Activated naive CD4-positive, alpha-beta T cell treated with anti-CD3 and anti-CD28 coated beads for 36 hours (primary cell): ENCODE measurements at regions of chr3 and their contacts with region 1.

Region 1: DNA sequence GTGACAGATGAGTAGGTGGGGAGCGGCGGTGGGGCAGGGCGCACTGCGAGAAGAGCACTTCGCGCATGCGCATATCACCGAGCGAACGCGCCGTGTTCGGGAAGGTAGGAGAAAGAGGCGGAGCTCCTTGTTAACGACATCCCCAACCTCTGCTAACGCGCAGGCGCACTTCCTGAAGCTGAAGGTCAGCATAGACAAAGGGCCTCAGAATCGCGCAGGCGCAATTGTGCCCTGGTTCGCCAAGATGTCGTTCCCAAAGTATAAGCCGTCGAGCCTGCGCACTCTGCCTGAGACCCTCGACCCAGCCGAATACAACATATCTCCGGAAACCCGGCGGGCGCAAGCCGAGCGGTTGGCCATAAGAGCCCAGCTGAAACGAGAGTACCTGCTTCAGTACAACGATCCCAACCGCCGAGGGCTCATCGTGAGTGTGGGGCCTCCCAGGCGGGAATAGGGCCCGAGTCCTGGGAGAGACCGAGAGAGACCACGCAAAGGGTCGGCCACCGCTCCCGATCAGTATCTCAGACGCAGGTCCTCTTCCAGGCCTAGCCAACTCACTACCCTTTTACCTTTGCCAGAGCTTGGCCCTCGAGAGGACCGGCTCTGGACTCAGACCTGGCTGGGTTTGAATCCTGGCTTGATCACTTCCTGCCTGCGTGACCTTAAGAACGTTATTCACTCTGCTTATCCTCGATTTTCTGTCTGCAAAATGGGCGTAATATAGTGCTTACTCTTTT is at the start of gene NDUFB4:
- DNase-seq: peak; percentile 97
- H3K4me3 Mint-ChIP-seq: peak within 1 kb of the TSS; percentile 86
- H3K27ac Mint-ChIP-seq: peak within 1 kb of the TSS; percentile 95
- H3K4me1 Mint-ChIP-seq: peaks cover 7% of the 10 kb centered on the region
- H3K27me3 Mint-ChIP-seq: no peaks in the 10 kb centered on the region
- total RNA-seq, gene NDUFB4: 146 to 152 TPM

Region 2: DNA sequence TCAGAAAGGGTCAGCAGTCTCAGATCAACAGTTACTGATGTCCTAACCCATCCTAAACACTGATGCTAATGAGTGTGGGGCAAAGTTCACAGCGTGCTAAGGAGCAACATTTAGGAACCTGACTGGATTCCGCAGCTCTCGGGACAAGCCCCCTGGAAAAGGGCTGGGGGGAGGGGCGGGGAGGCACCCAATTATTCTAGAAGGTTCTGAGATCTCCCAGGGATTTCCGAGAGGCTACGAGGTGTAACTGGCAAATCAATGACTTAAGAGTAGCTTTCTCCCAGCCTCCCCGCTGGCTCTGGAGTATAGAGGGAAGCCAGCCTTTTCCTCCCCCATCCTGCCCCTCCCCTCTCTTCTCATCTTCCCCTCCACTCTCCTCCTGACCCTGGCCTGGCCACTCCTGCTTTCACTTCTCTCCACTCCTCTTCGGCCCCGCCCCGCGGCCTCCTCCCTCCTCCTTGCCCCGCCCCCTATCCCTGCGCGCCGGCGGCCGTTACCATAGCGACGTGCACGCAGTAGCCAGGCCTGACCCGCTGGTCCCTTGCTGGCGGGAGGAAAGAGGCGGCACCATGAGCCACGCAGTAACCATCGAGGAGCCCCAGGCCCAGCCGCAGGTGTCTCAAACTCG is 893.6 kb before region 1 on chr3 and contains the start of gene CFAP91:
- CTCF ChIA-PET with region 1: no interaction called
- intact Hi-C with region 1: loop called (anchors 5 kb)
- DNase-seq: peak; percentile 83
- H3K4me3 Mint-ChIP-seq: peak within 1 kb of the TSS; percentile 72
- H3K27ac Mint-ChIP-seq: no peak within 1 kb of the TSS
- H3K4me1 Mint-ChIP-seq: peaks cover 45% of the 10 kb centered on the region
- H3K27me3 Mint-ChIP-seq: peaks cover 2% of the 10 kb centered on the region
- total RNA-seq, gene CFAP91: 0.26 to 0.57 TPM

Region 3: GRCh38 chr3:119891944-119892721 is 704.2 kb before region 1 on chr3:
- CTCF ChIA-PET with region 1: no interaction called
- intact Hi-C with region 1: no loop called
- DNase-seq: peak; percentile 59
- H3K4me3 Mint-ChIP-seq: no peak overlapping the region
- H3K27ac Mint-ChIP-seq: no peak overlapping the region
- H3K4me1 Mint-ChIP-seq: peaks cover 17% of the 10 kb centered on the region
- H3K27me3 Mint-ChIP-seq: no peaks in the 10 kb centered on the region

Region 4: GRCh38 chr3:120742198-120742849 is 146.0 kb after region 1 on chr3 and contains the starts of genes GTF2E1 and RABL3:
- CTCF ChIA-PET with region 1: interaction called, 3 read pairs
- intact Hi-C with region 1: loop called (anchors 1 kb)
- DNase-seq: peak; percentile 98
- H3K4me3 Mint-ChIP-seq: peak within 1 kb of the TSS; percentile 90
- H3K27ac Mint-ChIP-seq: peak within 1 kb of the TSS; percentile 96
- H3K4me1 Mint-ChIP-seq: peaks cover 33% of the 10 kb centered on the region
- H3K27me3 Mint-ChIP-seq: no peaks in the 10 kb centered on the region
- total RNA-seq, gene GTF2E1: 13.2 TPM
- total RNA-seq, gene RABL3: 34.7 to 36.8 TPM

Region 5: GRCh38 chr3:120795017-120795648 is 198.8 kb after region 1 on chr3:
- CTCF ChIA-PET with region 1: interaction called, 6 read pairs
- intact Hi-C with region 1: loop called (anchors 1 kb)
- DNase-seq: peak; percentile 93
- H3K4me3 Mint-ChIP-seq: no peak overlapping the region
- H3K27ac Mint-ChIP-seq: no peak overlapping the region
- H3K4me1 Mint-ChIP-seq: peaks cover 11% of the 10 kb centered on the region
- H3K27me3 Mint-ChIP-seq: peaks cover 3% of the 10 kb centered on the region

Region 6: DNA sequence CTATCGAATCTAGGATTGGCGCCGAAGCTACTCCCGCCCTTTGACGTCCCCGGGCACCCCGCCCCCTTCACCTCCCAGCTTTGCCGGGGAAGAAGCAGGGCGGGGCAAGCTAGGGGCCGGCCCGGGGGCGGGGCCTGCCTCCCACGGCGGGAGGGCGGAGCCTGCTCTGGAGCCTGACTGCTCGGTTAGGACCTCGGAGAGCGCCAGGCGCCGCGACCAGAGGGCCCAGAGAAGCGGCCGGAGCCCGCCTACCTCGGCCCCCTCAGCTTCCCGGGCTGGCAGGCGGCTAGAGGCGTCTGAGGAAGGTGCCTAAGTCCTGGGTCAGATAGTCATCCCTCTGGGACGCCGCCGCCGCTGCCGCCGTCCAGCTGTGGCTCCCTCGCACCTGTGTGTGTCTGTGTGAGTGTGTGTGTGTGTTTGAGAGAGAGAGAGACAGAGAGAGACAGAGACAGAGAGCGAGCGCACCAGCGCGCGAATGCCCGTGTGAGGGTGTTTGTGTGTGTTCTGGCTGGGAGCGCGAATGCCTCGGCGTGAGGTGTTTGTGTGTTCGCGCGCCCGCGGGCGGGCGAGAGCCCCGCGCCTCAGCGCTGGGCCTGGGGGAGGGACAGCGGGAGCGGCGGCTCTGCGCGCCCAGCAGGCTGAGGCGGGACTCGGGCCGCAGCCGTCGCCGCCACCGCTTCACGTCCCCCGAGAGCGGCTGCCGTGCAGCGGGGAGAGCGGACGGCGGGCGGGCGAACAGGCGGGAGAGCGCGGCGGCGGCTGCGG is 311.9 kb after region 1 on chr3 and contains the start of gene STXBP5L:
- CTCF ChIA-PET with region 1: no interaction called
- intact Hi-C with region 1: loop called (anchors 5 kb)
- DNase-seq: peak; percentile 64
- H3K4me3 Mint-ChIP-seq: peak within 1 kb of the TSS; percentile 64
- H3K27ac Mint-ChIP-seq: no peak within 1 kb of the TSS
- H3K4me1 Mint-ChIP-seq: peaks cover 18% of the 10 kb centered on the region
- H3K27me3 Mint-ChIP-seq: peaks cover 57% of the 10 kb centered on the region
- total RNA-seq, gene STXBP5L: not detected